BJ (cell line): ENCODE measurements at regions of chr1 and their contacts with region 1.

Region 1: GRCh38 chr1:109877320-109877771 is 33.3 kb upstream of the CSF1 start:
- DNase-seq: peak; percentile 87
- H3K4me3 ChIP-seq: no peak overlapping the region
- H3K27me3 ChIP-seq: no peaks in the 10 kb centered on the region
- CTCF ChIP-seq: peak; percentile 53

Region 2: DNA sequence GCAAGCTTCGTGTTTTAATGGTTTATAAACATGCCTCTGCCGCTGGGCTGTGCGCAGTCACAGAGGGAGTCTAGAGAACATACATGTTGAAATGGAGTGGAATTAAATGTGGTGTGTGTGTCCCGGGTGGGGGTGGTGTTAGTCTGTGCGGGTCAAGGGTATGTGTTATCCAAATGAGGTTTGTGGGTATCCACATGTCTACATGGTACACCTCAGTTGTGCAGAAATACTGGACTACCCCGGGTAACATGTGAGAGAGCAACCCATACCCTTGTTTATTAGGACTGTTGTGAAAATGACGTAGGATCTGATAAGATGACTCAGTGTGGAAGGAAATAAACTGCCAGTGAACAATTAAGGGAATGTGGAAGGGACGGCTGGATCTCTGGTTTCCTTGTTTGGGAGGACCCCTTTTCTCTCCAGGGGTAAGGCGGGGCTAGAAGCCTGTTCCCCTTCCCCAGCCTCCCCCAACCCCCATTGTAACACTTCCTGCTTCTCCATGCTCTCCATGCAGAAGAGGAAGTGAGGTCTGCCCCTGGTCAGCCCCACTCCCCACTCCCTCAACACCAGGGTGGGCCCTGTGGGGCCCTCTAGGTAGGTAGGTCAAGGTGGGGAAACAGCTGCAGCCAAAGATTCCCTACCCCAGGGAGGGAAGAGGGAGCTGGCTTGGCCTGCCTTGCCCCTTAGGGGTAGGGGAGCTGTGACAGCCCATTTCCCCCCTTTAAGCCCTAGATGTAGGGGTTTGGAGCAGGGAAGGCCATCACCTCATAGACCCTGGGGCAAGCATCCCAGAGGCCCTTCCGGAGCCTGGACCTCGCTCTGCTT is 114.3 kb before region 1 on chr1:
- CTCF ChIA-PET with region 1: no interaction called
- POLR2A ChIA-PET with region 1: interaction called, 10 read pairs
- DNase-seq: no peak
- H3K4me3 ChIP-seq: no peak overlapping the region
- H3K27me3 ChIP-seq: no peaks in the 10 kb centered on the region
- CTCF ChIP-seq: no peak

Region 3: GRCh38 chr1:109918671-109919070 is 41.3 kb after region 1 on chr1:
- CTCF ChIA-PET with region 1: no interaction called
- POLR2A ChIA-PET with region 1: no interaction called
- DNase-seq: no peak
- H3K4me3 ChIP-seq: no peak overlapping the region
- H3K27me3 ChIP-seq: no peaks in the 10 kb centered on the region
- CTCF ChIP-seq: no peak

Region 4: DNA sequence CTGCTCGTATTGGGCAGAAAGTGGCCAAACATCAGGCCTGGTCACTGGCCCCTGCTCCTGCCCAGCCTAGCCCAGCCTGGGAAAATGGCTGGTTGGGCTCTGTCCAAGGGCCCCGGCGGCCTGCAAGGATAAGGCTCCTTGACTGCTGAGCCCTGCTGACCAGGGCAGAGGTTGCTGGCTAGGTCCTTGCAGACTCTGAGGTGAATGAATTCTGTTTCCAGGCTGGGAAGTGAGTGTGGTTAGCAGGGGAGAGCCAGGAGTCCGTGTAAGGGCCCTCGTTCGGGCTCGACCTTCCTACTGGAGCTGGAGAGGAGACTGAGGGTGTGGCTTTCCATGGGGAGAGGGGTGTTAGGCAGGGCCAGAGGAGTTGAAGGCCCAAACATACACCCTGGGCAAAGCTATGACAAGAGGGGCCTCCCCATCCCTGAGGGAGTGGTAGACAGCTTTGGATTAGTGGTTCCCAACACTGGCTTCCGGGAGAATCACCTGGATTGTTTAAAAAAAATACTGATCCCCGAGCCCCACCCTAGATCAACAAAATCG is 53.9 kb after region 1 on chr1:
- CTCF ChIA-PET with region 1: no interaction called
- POLR2A ChIA-PET with region 1: no interaction called
- DNase-seq: no peak
- H3K4me3 ChIP-seq: no peak overlapping the region
- H3K27me3 ChIP-seq: no peaks in the 10 kb centered on the region
- CTCF ChIP-seq: no peak

Region 5: DNA sequence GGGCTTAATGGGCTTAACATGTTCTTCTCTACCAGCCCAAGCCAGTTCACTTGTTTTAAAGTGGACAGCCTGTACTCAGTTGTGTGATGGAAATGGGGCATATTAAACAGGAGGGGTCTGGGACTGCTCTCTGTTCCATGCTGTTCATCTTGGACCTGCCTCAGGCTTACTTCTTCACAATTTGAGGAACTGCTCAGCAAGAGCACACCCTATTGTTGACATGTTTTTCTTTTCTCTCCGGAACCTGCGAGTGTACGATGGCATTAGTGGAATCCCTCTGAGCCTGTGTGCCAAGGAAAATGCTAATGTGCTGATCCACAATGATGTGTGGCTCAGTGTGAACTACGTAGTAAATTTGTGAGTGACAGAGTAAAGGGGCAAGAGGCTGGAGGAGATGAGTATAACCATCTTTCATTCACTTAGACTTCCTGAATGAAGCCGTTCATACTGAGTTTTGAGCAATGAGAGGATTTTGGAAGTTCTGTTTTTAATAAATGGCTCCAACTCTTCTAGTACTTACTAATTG is 114.1 kb after region 1 on chr1:
- CTCF ChIA-PET with region 1: no interaction called
- POLR2A ChIA-PET with region 1: no interaction called
- DNase-seq: no peak
- H3K4me3 ChIP-seq: no peak overlapping the region
- H3K27me3 ChIP-seq: no peaks in the 10 kb centered on the region
- CTCF ChIP-seq: no peak